ENCODE measurements at regions of chr5 and their contacts with region 1.

Region 1: GRCh38 chr5:41465493-41466171 is 44.8 kb downstream of the PLCXD3 start:
- DNase-seq: peak; percentile 1
- ATAC-seq: no peak
- H3K4me3 ChIP-seq: no peak overlapping the region
- H3K27ac ChIP-seq: no peak overlapping the region
- H3K4me1 ChIP-seq: no peaks in the 10 kb centered on the region
- H3K27me3 ChIP-seq: no peaks in the 10 kb centered on the region
- CTCF ChIP-seq: no peak
- POLR2A ChIP-seq: no peak
- RAD21 ChIP-seq: no peak

Region 2: DNA sequence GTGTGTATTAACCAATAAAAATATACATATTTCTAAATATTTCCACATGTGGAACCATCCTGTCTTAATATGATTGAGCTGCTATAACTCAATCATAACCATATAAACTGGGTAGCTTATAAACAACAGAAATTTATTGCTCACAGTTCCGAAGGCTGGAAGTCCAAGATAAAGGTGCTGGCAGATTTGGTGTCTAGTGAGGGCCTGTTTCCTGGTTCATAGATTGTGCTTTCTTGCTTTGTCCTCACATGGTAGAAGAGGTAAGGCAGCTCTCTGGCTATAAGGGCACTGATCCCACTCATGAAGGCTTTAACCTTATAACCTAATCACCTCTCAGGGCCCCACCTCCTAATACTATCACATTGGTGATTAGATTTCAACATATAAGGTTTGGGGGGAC is 653.5 kb before region 1 on chr5:
- CTCF ChIA-PET with region 1: no interaction called
- POLR2A ChIA-PET with region 1: no interaction called
- dilution Hi-C with region 1: no loop called
- in situ Hi-C with region 1: no loop called
- intact Hi-C with region 1: no loop called
- DNase-seq: no peak
- ATAC-seq: no peak
- H3K4me3 ChIP-seq: no peak overlapping the region
- H3K27ac ChIP-seq: no peak overlapping the region
- H3K4me1 ChIP-seq: peaks cover 3% of the 10 kb centered on the region
- H3K27me3 ChIP-seq: no peaks in the 10 kb centered on the region
- CTCF ChIP-seq: no peak
- POLR2A ChIP-seq: no peak
- RAD21 ChIP-seq: no peak

Region 3: GRCh38 chr5:41408676-41409443 is 56.8 kb before region 1 on chr5:
- CTCF ChIA-PET with region 1: no interaction called
- POLR2A ChIA-PET with region 1: no interaction called
- dilution Hi-C with region 1: no loop called
- in situ Hi-C with region 1: no loop called
- intact Hi-C with region 1: no loop called
- DNase-seq: peak; percentile 74
- ATAC-seq: peak; percentile 83
- H3K4me3 ChIP-seq: no peak overlapping the region
- H3K27ac ChIP-seq: peak overlapping the region; percentile 42; the same call in 1 of the 2 replicates
- H3K4me1 ChIP-seq: peaks cover 8% of the 10 kb centered on the region
- H3K27me3 ChIP-seq: no peaks in the 10 kb centered on the region
- CTCF ChIP-seq: no peak
- POLR2A ChIP-seq: no peak
- RAD21 ChIP-seq: 0 out of 2 replicates have a peak, but pooled peaks have one; percentile 11

Region 4: DNA sequence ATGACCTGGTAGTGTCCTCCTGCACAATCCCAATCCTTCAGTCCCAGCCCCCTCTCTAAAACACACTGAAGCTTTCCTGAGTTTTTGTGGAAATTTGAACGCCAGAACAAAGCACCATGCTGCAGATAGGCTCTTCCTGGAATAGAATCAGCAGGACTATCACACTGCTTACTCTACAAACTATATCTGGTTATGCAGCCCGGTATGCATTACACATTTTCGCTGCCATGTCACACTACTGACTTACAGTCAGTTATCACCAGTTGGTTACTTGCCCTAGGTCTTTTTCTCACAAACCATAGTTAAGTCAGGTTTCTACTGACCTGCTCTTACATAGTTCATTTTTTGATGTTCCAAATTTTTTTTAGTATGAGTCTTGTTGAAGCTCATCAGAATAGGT is 19.9 kb after region 1 on chr5:
- CTCF ChIA-PET with region 1: no interaction called
- POLR2A ChIA-PET with region 1: interaction called, 12 read pairs
- dilution Hi-C with region 1: no loop called
- in situ Hi-C with region 1: no loop called
- intact Hi-C with region 1: no loop called
- DNase-seq: no peak
- ATAC-seq: no peak
- H3K4me3 ChIP-seq: no peak overlapping the region
- H3K27ac ChIP-seq: no peak overlapping the region
- H3K4me1 ChIP-seq: no peaks in the 10 kb centered on the region
- H3K27me3 ChIP-seq: no peaks in the 10 kb centered on the region
- CTCF ChIP-seq: no peak
- POLR2A ChIP-seq: no peak
- RAD21 ChIP-seq: no peak

Region 5: DNA sequence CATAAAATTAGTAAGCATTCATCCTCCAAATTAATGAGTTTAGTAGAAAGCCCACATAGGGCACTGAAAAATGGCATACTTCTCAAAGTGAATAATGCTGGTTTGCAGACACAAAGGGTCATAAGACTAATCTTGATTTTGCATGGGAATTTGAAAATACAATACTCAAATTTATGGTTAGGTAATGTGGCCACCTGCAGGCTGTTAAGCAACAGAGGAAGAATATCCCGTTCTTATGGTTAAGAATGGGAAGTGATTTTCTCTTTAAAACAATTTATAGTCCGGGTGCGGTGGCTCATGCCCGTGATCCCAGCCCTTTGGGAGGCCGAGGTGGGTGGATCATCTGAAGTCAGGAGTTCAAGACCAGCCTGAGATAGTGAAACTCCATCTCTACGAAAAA is 54.2 kb after region 1 on chr5:
- CTCF ChIA-PET with region 1: no interaction called
- POLR2A ChIA-PET with region 1: no interaction called
- dilution Hi-C with region 1: no loop called
- in situ Hi-C with region 1: no loop called
- intact Hi-C with region 1: no loop called
- DNase-seq: no peak
- ATAC-seq: no peak
- H3K4me3 ChIP-seq: no peak overlapping the region
- H3K27ac ChIP-seq: no peak overlapping the region
- H3K4me1 ChIP-seq: no peaks in the 10 kb centered on the region
- H3K27me3 ChIP-seq: no peaks in the 10 kb centered on the region
- CTCF ChIP-seq: no peak
- POLR2A ChIP-seq: no peak
- RAD21 ChIP-seq: no peak

Region 6: GRCh38 chr5:41629897-41630296 is 164.3 kb after region 1 on chr5:
- CTCF ChIA-PET with region 1: no interaction called
- POLR2A ChIA-PET with region 1: no interaction called
- dilution Hi-C with region 1: no loop called
- in situ Hi-C with region 1: no loop called
- intact Hi-C with region 1: loop called (anchors 10 kb)
- DNase-seq: no peak
- ATAC-seq: no peak
- H3K4me3 ChIP-seq: no peak overlapping the region
- H3K27ac ChIP-seq: no peak overlapping the region
- H3K4me1 ChIP-seq: no peaks in the 10 kb centered on the region
- H3K27me3 ChIP-seq: no peaks in the 10 kb centered on the region
- CTCF ChIP-seq: no peak
- POLR2A ChIP-seq: no peak
- RAD21 ChIP-seq: no peak

Measured in IMR-90 (cell line).